Natural killer cell (primary cell): ENCODE measurements at regions of chr12 and their contacts with region 1.

Region 1: GRCh38 chr12:6752921-6753771 is at the start of gene MLF2:
- DNase-seq: peak; percentile 97 to 98
- ATAC-seq: peak; percentile 87 to 94 (median 88)
- H3K4me3 ChIP-seq: peak within 1 kb of the TSS; percentile 78
- H3K4me3 Mint-ChIP-seq: peak within 1 kb of the TSS; percentile 95
- H3K27ac ChIP-seq: peak within 1 kb of the TSS; percentile 93
- H3K27ac Mint-ChIP-seq: peak within 1 kb of the TSS; percentile 95 to 97
- H3K4me1 ChIP-seq: peaks cover 16% of the 10 kb centered on the region
- H3K4me1 Mint-ChIP-seq: peaks cover 5 to 34% of the 10 kb centered on the region in 2 donors
- H3K27me3 ChIP-seq: no peaks in the 10 kb centered on the region
- H3K27me3 Mint-ChIP-seq: peaks cover 0 to 13% of the 10 kb centered on the region in 2 donors
- CTCF ChIP-seq: no peak
- total RNA-seq, gene MLF2: 114 to 117 (median 116) TPM

Region 2: DNA sequence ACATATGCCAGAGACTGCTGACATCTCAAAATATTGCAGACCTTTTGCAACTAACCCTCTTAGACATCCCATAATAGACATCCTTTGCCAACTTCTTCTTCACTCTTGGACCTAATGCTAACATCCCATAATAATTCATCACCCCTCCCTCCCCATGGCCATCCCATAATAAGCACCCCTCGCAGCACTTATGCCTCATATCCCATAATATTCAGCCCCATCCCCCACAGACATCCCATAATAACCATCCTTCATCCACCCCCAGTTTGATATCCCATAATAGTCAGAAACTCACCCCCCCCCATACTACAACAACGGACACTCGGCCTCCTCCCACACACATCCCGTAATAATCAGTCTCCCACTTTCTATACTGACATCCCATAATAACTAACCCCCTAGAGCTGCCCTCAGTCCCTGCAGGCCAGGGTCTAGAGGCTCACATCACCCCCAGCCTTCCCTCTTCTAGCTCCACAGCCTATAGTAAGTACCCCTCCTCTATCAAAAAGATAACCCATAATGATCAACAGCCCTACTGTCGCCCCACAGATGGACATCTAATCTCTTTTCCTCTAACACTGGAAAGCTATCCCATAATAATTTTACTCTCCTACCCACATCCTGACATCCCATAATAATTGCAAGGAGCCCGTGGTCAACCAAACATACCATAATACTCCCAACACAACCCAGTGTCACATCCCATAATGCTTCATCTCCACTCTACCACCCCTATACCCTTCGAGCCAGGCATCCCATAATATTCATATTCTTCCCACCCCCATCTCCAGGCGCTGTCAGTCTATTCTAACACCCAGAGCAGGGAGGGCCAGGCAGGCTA is 145.2 kb before region 1 on chr12:
- intact Hi-C with region 1: loop called (anchors 5 kb)
- DNase-seq: peak; percentile 49 to 87
- ATAC-seq: peak; percentile 43 to 69 (median 53)
- H3K4me3 ChIP-seq: no peak overlapping the region
- H3K4me3 Mint-ChIP-seq: no peak overlapping the region
- H3K27ac ChIP-seq: peak overlapping the region; percentile 97
- H3K27ac Mint-ChIP-seq: no peak overlapping the region
- H3K4me1 ChIP-seq: peaks cover 59% of the 10 kb centered on the region
- H3K4me1 Mint-ChIP-seq: peaks cover 40 to 53% of the 10 kb centered on the region in 2 donors
- H3K27me3 ChIP-seq: no peaks in the 10 kb centered on the region
- H3K27me3 Mint-ChIP-seq: no peaks in the 10 kb centered on the region
- CTCF ChIP-seq: no peak

Region 3: DNA sequence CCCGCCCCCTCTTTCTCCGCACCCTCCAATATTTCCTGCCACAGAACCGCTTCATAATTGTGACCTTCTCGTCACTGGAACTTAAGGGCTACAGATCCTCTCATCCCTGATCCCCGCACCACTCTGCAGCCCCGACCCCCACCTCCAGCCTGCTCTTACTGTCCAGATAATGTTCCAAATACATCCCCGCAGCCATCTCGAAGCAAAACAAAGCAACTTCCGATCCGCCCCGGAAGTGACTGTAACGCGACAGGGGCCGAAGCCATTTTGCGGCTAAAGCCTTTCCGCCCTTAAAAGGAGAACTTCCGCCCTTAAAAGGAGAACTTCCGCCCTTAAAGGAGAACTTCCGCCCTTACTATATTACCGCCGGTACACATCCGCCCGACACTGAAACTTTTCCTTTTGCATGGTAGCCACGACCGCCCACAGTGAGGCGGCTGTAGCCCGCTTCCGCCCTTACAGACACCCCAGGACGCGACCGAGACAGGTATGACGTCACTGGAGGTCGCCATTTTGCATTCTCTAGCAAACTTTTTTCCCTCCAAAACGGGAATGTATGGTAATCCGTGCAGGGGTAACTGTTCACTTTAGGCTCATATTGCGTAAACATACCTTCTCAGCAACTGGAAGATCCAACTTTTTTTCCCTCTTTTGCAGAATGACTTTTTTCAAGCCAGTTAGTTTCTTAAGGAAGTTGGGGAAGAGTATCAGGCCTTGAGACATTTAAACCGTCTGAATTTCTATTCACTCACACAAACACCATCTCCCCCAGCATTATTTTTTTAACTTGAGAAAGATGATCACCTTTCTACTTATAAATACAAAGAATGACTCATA is 90.0 kb before region 1 on chr12 and contains the start of gene ING4:
- intact Hi-C with region 1: loop called (anchors 1 kb)
- DNase-seq: peak; percentile 92 to 99
- ATAC-seq: peak; percentile 97 to 100 (median 98)
- H3K4me3 ChIP-seq: peak within 1 kb of the TSS; percentile 61
- H3K4me3 Mint-ChIP-seq: peak within 1 kb of the TSS; percentile 96
- H3K27ac ChIP-seq: peak within 1 kb of the TSS; percentile 86
- H3K27ac Mint-ChIP-seq: peak within 1 kb of the TSS; percentile 93 to 95
- H3K4me1 ChIP-seq: peaks cover 9% of the 10 kb centered on the region
- H3K4me1 Mint-ChIP-seq: peaks cover 27 to 38% of the 10 kb centered on the region in 2 donors
- H3K27me3 ChIP-seq: no peaks in the 10 kb centered on the region
- H3K27me3 Mint-ChIP-seq: no peaks in the 10 kb centered on the region
- CTCF ChIP-seq: no peak
- total RNA-seq, gene ING4: 29.9 to 40.9 (median 30.2) TPM

Region 4: DNA sequence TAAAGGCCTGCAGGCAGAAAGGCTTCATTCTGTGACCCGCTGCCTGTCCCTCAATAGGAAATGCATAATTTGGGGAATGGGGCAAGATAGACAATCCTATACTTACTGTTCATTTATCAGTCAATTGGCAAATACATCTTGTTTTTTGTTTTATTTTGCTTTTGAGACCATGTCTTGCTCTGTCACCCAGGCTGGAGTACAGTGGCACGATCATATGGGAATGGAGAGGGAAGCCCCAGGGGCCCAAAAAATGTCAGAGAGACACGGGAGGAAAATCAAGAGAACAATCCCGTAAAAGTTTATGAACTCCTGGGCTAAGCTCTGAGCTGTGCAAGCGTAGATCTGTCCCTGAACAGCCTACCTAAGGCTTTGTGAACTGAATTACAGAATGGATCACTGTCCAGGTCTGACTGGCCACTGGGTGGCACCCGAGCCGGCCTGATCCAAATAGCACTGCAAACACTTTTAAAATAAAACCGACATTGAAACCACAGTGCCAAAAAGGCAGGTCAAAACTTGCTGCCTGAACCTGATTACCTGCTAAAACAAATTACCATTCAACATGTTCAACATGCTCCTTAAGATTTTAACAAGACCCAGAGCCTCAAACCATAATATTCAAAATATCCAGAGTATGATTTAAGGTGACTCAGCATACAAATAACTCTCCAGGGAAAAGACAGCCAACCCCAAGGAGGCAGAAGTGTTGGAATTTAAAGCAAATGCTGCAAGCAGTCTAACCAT is 17.5 kb before region 1 on chr12:
- intact Hi-C with region 1: no loop called
- DNase-seq: peak in 1 of 2 donors; percentile 60
- ATAC-seq: peak; percentile 70 to 78 (median 75)
- H3K4me3 ChIP-seq: no peak overlapping the region
- H3K4me3 Mint-ChIP-seq: no peak overlapping the region
- H3K27ac ChIP-seq: no peak overlapping the region
- H3K27ac Mint-ChIP-seq: peak overlapping the region in 1 of 2 donors; percentile 11
- H3K4me1 ChIP-seq: no peaks in the 10 kb centered on the region
- H3K4me1 Mint-ChIP-seq: peaks cover 5 to 10% of the 10 kb centered on the region in 2 donors
- H3K27me3 ChIP-seq: no peaks in the 10 kb centered on the region
- H3K27me3 Mint-ChIP-seq: no peaks in the 10 kb centered on the region
- CTCF ChIP-seq: peak; percentile 27

Region 5: DNA sequence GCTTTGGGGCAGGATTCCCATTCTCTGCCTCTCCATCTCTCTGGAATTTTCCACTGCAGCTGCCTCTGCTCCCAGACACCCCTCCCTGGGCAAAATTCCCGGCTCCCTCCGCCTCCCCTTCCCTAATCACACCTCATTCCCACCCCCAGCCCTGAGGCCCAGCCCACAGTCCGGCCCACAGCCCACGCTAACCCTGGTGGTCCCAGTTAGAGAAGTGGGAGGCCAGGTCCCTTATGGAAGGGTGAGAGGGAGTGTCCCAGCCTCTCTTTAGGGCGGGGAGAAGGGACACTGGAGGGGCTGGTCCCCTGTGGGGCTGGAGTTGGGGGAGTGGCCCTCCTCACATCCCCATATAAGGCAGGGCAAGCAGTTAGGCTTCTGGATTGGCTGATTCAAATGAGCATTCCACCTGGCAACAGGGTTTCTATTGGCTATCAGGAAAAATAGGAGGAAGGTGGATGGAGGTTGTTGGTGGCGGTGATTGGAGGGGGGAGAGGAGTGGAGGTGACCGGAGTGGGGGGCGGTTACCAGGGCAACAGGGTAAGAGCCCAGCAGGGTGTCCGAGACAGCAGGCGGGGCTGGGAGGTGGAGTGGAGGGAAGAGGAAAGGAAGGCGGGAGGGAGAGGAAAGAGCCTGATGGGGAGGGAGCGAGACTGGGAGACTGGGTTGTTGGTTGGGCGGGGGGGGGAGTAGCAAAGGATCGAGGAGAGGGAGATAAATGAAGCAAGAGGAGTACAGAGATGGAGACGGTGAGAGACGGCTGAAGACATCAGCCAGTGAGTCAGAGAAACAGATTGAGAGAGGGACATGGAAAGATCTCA is 11.1 kb after region 1 on chr12:
- intact Hi-C with region 1: loop called (anchors 1 kb)
- DNase-seq: peak; percentile 31 to 81
- ATAC-seq: peak; percentile 85 to 90 (median 85)
- H3K4me3 ChIP-seq: no peak overlapping the region
- H3K4me3 Mint-ChIP-seq: peak overlapping the region; percentile 67
- H3K27ac ChIP-seq: no peak overlapping the region
- H3K27ac Mint-ChIP-seq: peak overlapping the region in 1 of 2 donors; percentile 25
- H3K4me1 ChIP-seq: peaks cover 34% of the 10 kb centered on the region
- H3K4me1 Mint-ChIP-seq: peaks cover 26 to 28% of the 10 kb centered on the region in 2 donors
- H3K27me3 ChIP-seq: peaks cover 10% of the 10 kb centered on the region
- H3K27me3 Mint-ChIP-seq: peaks cover 33 to 49% of the 10 kb centered on the region in 2 donors
- CTCF ChIP-seq: no peak

Region 6: DNA sequence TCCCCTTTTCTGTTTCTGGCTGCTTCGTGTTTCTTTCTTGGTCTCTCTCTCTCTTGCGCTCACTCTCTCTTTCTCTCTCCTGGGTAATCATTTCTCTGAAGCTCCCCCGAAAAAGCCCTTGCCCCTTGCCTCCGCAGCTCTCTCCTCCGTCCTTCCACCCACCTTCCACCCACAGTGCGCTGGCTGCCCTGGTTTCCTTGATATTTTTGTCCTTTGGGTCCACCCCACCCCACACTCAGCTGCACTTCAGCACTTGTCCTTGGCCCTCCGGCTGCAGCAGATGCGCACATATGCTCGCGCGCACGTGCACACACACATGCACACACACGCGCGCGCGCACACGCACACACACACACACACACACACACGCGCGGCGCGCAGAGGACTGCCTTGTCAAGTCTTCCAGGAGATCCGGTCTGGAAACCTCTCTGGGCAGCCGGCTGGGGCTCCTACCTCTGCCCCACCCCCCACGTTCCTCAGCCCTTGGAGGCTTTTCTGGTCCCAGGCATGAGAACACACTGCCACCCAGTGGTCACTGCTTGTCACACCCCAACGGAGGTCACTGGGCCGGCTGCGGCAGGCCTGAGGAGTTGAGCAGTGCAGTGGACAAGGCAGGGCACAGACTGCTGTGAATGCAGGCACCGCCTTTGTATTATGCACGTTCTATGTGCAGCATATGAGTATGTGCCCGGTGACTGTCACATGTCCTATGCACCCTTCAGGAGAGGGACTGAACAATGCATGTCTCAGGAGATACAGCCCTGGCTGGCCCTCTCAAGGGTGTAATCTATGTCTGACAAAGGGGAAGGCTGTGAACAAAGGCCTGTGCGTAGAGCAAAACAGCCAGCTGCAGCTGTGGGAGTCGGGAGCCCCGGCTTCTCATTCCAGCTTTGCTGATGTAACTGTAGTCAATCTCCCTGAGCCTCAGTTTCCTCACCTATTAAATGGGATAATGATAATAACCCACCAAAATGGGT is 25.7 kb after region 1 on chr12:
- intact Hi-C with region 1: loop called (anchors 1 kb)
- DNase-seq: peak; percentile 79 to 94
- ATAC-seq: peak; percentile 93 to 99 (median 97)
- H3K4me3 ChIP-seq: peak overlapping the region; percentile 38
- H3K4me3 Mint-ChIP-seq: peak overlapping the region; percentile 89
- H3K27ac ChIP-seq: peak overlapping the region; percentile 28
- H3K27ac Mint-ChIP-seq: peak overlapping the region; percentile 24 to 67
- H3K4me1 ChIP-seq: peaks cover 34% of the 10 kb centered on the region
- H3K4me1 Mint-ChIP-seq: peaks cover 13 to 21% of the 10 kb centered on the region in 2 donors
- H3K27me3 ChIP-seq: peaks cover 17% of the 10 kb centered on the region
- H3K27me3 Mint-ChIP-seq: peaks cover 45 to 48% of the 10 kb centered on the region in 2 donors
- CTCF ChIP-seq: peak; percentile 93

Region 7: GRCh38 chr12:6825398-6826124 is 72.4 kb after region 1 on chr12:
- intact Hi-C with region 1: loop called (anchors 5 kb)
- DNase-seq: peak; percentile 60 to 88
- ATAC-seq: peak; percentile 57 to 72 (median 67)
- H3K4me3 ChIP-seq: no peak overlapping the region
- H3K4me3 Mint-ChIP-seq: peak overlapping the region; percentile 31
- H3K27ac ChIP-seq: no peak overlapping the region
- H3K27ac Mint-ChIP-seq: no peak overlapping the region
- H3K4me1 ChIP-seq: peaks cover 33% of the 10 kb centered on the region
- H3K4me1 Mint-ChIP-seq: peaks cover 20 to 39% of the 10 kb centered on the region in 2 donors
- H3K27me3 ChIP-seq: peaks cover 52% of the 10 kb centered on the region
- H3K27me3 Mint-ChIP-seq: peaks cover 55 to 73% of the 10 kb centered on the region in 2 donors
- CTCF ChIP-seq: peak; percentile 64

Region 8: GRCh38 chr12:6851921-6852650 is 98.9 kb after region 1 on chr12 and contains the start of gene USP5:
- intact Hi-C with region 1: loop called (anchors 1 kb)
- DNase-seq: peak; percentile 96 to 99
- ATAC-seq: peak; percentile 79 to 92 (median 80)
- H3K4me3 ChIP-seq: peak within 1 kb of the TSS; percentile 76
- H3K4me3 Mint-ChIP-seq: peak within 1 kb of the TSS; percentile 91
- H3K27ac ChIP-seq: peak within 1 kb of the TSS; percentile 95
- H3K27ac Mint-ChIP-seq: peak within 1 kb of the TSS; percentile 95 to 99
- H3K4me1 ChIP-seq: peaks cover 22% of the 10 kb centered on the region
- H3K4me1 Mint-ChIP-seq: peaks cover 8 to 43% of the 10 kb centered on the region in 2 donors
- H3K27me3 ChIP-seq: no peaks in the 10 kb centered on the region
- H3K27me3 Mint-ChIP-seq: no peaks in the 10 kb centered on the region
- CTCF ChIP-seq: no peak
- total RNA-seq, gene USP5: 48.3 to 67.2 (median 57.2) TPM